A673 (cell line): ENCODE measurements at regions of chr20 and their contacts with region 1.

Region 1: DNA sequence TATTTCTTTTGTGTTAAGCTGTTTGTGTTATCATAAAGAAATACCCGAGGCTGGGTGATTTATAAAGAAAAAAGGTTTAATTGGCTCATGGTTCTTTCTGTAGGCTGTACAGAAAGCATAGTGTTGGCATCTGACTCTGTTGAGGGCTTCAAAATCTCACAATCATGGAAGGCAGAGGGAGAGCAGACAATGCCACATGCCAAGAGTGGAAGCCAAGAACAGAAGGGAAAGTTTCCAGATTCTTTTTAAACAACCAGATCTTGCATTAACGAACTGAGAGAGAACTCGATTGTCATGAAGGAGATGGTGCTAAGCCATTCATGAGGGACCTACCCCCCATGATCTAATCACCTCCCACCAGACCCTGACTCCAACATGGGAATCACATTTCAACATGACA is 290.1 kb downstream of the BMP2 start:
- DNase-seq: no peak
- H3K4me3 ChIP-seq: no peak overlapping the region
- H3K27ac ChIP-seq: no peak overlapping the region
- H3K4me1 ChIP-seq: no peaks in the 10 kb centered on the region
- H3K27me3 ChIP-seq: no peaks in the 10 kb centered on the region
- CTCF ChIP-seq: no peak

Region 2: DNA sequence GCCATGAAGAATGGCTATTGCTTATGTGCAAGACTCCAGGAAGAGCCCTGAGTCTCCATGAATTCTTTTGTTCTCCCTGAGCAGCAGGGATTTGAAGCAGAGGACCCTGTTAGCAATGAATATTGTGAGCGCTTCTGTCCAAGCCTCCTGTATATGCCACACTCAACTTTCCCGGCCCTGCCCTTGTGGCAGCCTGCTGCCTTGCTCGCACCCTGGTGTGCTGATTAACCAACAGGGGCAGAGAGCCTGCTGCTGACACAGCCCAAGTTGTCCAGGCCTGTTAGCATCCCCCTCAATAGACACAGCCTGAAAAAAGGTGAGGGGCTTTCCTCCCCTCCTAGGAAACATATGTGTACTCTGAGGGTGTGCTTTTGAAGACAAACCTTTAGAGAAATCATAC is 158.7 kb before region 1 on chr20:
- CTCF ChIA-PET with region 1: no interaction called
- POLR2A ChIA-PET with region 1: no interaction called
- intact Hi-C with region 1: loop called (anchors 10 kb)
- DNase-seq: no peak
- H3K4me3 ChIP-seq: no peak overlapping the region
- H3K27ac ChIP-seq: no peak overlapping the region
- H3K4me1 ChIP-seq: no peaks in the 10 kb centered on the region
- H3K27me3 ChIP-seq: peaks cover 3% of the 10 kb centered on the region
- CTCF ChIP-seq: no peak

Region 3: DNA sequence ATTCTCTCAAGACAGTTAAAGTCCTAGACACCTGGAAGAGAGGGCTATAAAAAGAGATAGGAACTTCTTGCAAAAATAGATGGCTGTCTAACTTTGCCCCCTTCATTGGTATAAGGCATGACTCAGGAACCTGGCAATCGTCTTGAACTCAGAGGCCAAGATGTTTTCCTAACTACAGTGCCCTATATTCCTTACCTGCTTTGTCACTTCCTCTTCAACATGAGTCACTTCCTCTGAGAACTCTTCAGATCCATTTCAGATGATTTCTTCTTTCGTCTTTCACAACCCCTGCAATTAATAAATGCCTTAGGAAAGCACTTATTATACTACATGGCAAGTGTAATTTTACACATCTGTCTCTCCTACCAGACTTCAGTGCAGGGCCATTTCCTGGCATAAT is 799.1 kb after region 1 on chr20:
- CTCF ChIA-PET with region 1: no interaction called
- POLR2A ChIA-PET with region 1: no interaction called
- intact Hi-C with region 1: no loop called
- DNase-seq: peak; percentile 67
- H3K4me3 ChIP-seq: no peak overlapping the region
- H3K27ac ChIP-seq: no peak overlapping the region
- H3K4me1 ChIP-seq: no peaks in the 10 kb centered on the region
- H3K27me3 ChIP-seq: peaks cover 9% of the 10 kb centered on the region
- CTCF ChIP-seq: no peak